Right ventricle myocardium superior (tissue), 1 donor: ENCODE measurements at regions of chr3 and their contacts with region 1.

Region 1: DNA sequence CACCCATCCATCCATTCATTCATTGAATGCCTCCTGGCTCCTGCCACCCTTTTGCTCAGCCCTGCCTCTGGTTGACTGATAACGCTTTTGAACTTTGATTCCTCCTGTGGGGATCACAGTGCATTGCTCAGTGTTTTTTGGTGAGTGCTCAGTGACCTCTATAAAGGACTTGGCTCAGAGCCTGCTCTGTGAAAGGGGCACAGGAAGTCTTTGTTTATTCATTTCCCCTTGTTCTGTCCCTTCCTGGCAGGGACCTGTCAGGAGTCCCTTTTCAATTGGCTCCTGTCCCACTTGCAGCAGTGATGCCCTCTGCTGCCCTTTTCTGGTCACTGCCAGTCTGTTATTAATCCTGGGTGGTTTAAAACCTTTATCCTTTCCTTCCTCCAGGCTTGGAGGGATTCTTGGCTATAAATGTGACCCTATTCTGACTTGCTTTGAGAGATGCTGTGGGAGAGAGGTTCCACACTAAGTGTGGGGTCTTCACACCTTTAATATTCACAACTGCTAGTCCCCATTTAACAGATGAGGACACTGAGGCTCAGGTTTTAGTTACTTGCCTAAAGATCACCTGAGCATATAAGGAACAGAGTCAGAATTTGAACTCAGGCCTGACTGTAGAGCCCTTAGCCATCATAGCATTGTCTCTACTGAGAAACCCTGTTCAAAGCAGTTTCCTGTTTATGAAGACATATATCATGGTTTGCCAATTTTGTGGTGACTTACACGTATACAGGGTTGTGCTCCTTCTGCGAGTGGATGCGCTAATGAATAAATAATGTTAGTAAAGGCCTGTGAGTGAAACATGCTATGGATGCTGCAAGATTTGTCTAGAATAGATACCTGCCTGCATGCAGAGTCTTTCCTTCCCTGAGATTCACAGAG is 23.2 kb upstream of the TATDN2 start:
- DNase-seq: peak; percentile 75
- ATAC-seq: peak; percentile 93

Region 2: GRCh38 chr3:9852549-9852948 is 372.5 kb before region 1 on chr3:
- intact Hi-C with region 1: no loop called
- DNase-seq: no peak
- ATAC-seq: no peak

Region 3: GRCh38 chr3:10010486-10011465 is 214.2 kb before region 1 on chr3:
- intact Hi-C with region 1: no loop called
- DNase-seq: peak; percentile 99
- ATAC-seq: peak; percentile 91

Region 4: GRCh38 chr3:10164546-10165393 is 60.3 kb before region 1 on chr3 and contains the start of gene IRAK2:
- intact Hi-C with region 1: loop called (anchors 2 kb)
- DNase-seq: peak; percentile 87
- ATAC-seq: peak; percentile 98
- total RNA-seq, gene IRAK2: 1.7 TPM